B cell (primary cell): ENCODE measurements at regions of chr6 and their contacts with region 1.

Region 1: DNA sequence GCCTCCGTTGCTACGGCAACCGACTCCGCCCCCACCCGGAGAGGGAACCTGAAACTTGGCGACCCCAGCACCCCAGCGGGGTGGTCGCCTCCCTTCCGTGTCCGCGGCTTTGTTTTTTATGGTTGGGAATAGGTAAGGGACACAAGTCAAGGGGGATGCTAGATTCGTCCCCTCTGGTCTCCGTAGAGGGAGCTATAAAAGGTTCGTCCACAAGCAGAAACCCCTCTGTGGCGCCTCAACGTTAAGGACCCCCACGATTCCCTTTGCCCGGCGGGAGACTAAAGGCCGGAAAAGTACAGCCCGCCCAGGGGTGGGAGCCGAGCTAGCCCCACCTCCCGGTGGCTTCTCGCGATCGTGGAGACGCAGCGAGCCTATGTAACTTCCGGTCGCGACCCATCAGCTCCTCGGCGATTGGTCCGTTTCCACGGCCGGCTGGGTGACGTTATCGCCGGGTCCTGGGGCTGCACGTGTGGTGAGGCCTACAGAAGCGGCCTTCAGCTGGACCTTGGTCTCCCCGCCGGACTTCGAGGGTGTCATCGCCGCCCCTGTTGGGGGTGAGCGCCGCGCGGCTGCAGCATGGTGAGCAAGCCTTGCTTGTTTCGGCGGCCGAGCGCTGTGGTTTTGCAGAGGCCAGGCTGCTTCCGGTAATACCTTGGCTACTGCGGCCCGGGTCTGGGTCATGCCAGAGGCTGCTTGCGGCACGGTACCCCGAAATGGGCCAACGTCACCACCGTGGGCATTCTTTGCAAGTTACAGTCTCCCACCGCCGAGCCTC is at the start of gene LTV1:
- DNase-seq: peak; percentile 95
- ATAC-seq: peak; percentile 97
- H3K4me3 ChIP-seq: peak within 1 kb of the TSS; percentile 72 to 94 (median 90)
- H3K4me3 Mint-ChIP-seq: peak within 1 kb of the TSS; percentile 93
- H3K27ac ChIP-seq: peak within 1 kb of the TSS; percentile 86 to 93
- H3K27ac Mint-ChIP-seq: peak within 1 kb of the TSS; percentile 95
- H3K4me1 ChIP-seq: peaks cover 11 to 17% of the 10 kb centered on the region in 2 donors
- H3K4me1 Mint-ChIP-seq: peaks cover 17% of the 10 kb centered on the region
- H3K27me3 ChIP-seq: no peaks in the 10 kb centered on the region
- H3K27me3 Mint-ChIP-seq: peaks cover 11% of the 10 kb centered on the region
- CTCF ChIP-seq: no peak
- total RNA-seq, gene LTV1: 23.6 and 27.3 TPM in 2 replicates

Region 2: GRCh38 chr6:142146828-142147662 is 1696.0 kb before region 1 on chr6 and contains the starts of genes NMBR and VTA1:
- CTCF ChIA-PET with region 1: no interaction called
- POLR2A ChIA-PET with region 1: no interaction called
- intact Hi-C with region 1: loop called (anchors 2 kb)
- DNase-seq: peak; percentile 99
- ATAC-seq: peak; percentile 98
- H3K4me3 ChIP-seq: peak within 1 kb of the TSS; percentile 84 to 97 (median 94)
- H3K4me3 Mint-ChIP-seq: peak within 1 kb of the TSS; percentile 88
- H3K27ac ChIP-seq: peak within 1 kb of the TSS; percentile 60 to 69
- H3K27ac Mint-ChIP-seq: peak within 1 kb of the TSS; percentile 81
- H3K4me1 ChIP-seq: peaks cover 21 to 24% of the 10 kb centered on the region in 2 donors
- H3K4me1 Mint-ChIP-seq: peaks cover 55% of the 10 kb centered on the region
- H3K27me3 ChIP-seq: peaks cover 0 to 3% (median 0%) of the 10 kb centered on the region in 4 experiments
- H3K27me3 Mint-ChIP-seq: peaks cover 3% of the 10 kb centered on the region
- CTCF ChIP-seq: peak; percentile 96
- total RNA-seq, gene NMBR: not detected in 2 replicates
- total RNA-seq, gene VTA1: 26.2 and 27.9 TPM in 2 replicates

Region 3: DNA sequence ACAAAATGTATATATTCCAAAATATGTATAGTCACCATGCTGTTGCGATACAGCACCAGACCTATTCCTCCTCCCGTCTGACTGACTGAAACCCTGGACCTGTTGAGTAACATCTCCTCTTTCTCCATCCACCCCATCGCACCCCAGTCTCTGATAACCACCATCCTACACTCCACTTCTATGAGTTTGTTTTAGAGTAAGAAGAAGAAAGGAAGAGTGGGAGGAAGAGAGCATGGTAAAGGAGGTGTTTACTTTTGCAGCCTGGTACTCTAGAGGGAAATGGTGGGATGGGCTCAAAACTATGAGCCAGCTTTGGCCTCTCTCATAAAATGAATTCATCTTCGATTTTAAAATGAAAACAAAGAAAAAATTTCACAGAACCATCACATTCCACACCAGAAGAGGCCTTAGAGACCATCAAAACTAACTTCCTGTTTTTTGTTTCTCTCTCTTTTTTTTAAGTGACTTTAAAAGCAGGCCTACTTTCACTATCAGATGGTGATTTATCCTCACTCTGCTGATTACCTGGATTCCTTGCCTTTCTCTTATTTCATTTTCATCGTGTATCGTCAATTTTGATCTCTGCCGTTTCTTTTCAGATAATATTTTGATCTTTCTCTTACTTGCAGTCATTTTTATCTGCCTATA is 314.8 kb before region 1 on chr6:
- CTCF ChIA-PET with region 1: no interaction called
- POLR2A ChIA-PET with region 1: no interaction called
- intact Hi-C with region 1: loop called (anchors 1 kb)
- DNase-seq: peak; percentile 60
- ATAC-seq: peak; percentile 69
- H3K4me3 ChIP-seq: no peak overlapping the region
- H3K4me3 Mint-ChIP-seq: no peak overlapping the region
- H3K27ac ChIP-seq: peak overlapping the region; percentile 61 to 70
- H3K27ac Mint-ChIP-seq: peak overlapping the region; percentile 89
- H3K4me1 ChIP-seq: peaks cover 8 to 11% of the 10 kb centered on the region in 2 donors
- H3K4me1 Mint-ChIP-seq: peaks cover 9% of the 10 kb centered on the region
- H3K27me3 ChIP-seq: no peaks in the 10 kb centered on the region
- H3K27me3 Mint-ChIP-seq: no peaks in the 10 kb centered on the region
- CTCF ChIP-seq: no peak

Region 4: DNA sequence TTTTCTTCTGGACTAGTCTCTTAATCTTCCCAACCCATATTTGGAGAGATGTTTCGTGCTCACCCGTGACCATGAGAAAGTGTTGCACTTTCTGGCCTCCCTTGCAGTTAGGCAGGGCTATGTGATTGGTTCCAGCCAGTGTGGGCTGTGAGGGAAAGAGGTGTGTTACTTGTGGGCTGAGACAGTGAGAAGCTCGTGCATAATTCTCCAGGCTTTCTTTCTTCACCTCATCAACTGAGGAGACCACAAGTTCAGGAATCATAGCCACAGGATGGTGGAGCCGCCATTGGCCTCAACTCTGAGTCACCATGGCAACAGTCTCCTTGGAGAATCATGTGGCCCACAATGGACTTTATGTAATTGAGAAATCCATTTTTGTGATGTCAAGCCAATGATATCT is 274.0 kb before region 1 on chr6:
- CTCF ChIA-PET with region 1: no interaction called
- POLR2A ChIA-PET with region 1: no interaction called
- intact Hi-C with region 1: loop called (anchors 5 kb)
- DNase-seq: no peak
- ATAC-seq: no peak
- H3K4me3 ChIP-seq: no peak overlapping the region
- H3K4me3 Mint-ChIP-seq: no peak overlapping the region
- H3K27ac ChIP-seq: no peak overlapping the region
- H3K27ac Mint-ChIP-seq: no peak overlapping the region
- H3K4me1 ChIP-seq: peaks cover 0 to 4% of the 10 kb centered on the region in 2 donors
- H3K4me1 Mint-ChIP-seq: peaks cover 6% of the 10 kb centered on the region
- H3K27me3 ChIP-seq: no peaks in the 10 kb centered on the region
- H3K27me3 Mint-ChIP-seq: no peaks in the 10 kb centered on the region
- CTCF ChIP-seq: no peak

Region 5: DNA sequence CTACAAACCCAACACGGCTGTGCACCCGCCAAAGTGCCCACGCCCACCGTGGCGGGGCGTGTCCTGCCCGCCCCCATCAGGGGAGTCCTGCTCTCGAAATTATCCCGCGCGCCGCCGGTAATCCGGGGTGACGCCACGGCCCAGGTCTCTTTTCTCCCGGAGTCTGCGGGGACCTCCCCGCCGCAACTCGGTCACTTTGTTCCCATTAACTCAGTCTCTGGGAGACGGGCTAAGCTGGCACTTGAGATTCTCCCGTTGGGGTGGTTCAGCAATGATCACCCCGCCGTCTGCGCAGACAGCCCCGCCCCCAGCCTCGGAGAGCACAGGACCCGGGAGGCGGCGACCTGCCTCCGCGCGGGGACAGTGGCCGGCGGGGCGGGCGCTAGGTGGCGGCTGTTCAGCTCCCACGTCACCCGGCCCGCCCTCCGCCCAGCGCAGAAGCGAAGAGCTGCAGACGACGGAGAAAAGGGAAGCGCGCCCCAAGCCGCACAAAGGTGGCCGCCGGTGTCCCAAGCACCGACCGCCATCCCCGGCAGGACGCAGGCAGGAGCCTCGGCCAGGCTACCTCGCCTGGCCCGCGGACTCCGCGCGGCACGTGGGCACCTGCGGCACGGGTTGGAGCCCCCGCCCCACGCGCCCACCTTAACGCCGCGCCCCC is 220.8 kb after region 1 on chr6:
- CTCF ChIA-PET with region 1: no interaction called
- POLR2A ChIA-PET with region 1: no interaction called
- intact Hi-C with region 1: loop called (anchors 1 kb)
- DNase-seq: peak; percentile 97
- ATAC-seq: peak; percentile 91
- H3K4me3 ChIP-seq: peak overlapping the region; percentile 74 to 86 (median 82)
- H3K4me3 Mint-ChIP-seq: peak overlapping the region; percentile 90
- H3K27ac ChIP-seq: peak overlapping the region; percentile 88 to 96
- H3K27ac Mint-ChIP-seq: peak overlapping the region; percentile 92
- H3K4me1 ChIP-seq: peaks cover 21 to 32% of the 10 kb centered on the region in 2 donors
- H3K4me1 Mint-ChIP-seq: peaks cover 37% of the 10 kb centered on the region
- H3K27me3 ChIP-seq: no peaks in the 10 kb centered on the region
- H3K27me3 Mint-ChIP-seq: no peaks in the 10 kb centered on the region
- CTCF ChIP-seq: peak; percentile 14

Region 6: GRCh38 chr6:144149891-144150709 is 307.0 kb after region 1 on chr6 and contains the start of gene STX11:
- CTCF ChIA-PET with region 1: no interaction called
- POLR2A ChIA-PET with region 1: no interaction called
- intact Hi-C with region 1: loop called (anchors 2 kb)
- DNase-seq: peak; percentile 85
- ATAC-seq: peak; percentile 75
- H3K4me3 ChIP-seq: peak within 1 kb of the TSS; percentile 54 to 96 (median 76)
- H3K4me3 Mint-ChIP-seq: peak within 1 kb of the TSS; percentile 96
- H3K27ac ChIP-seq: peak within 1 kb of the TSS; percentile 61 to 78
- H3K27ac Mint-ChIP-seq: peak within 1 kb of the TSS; percentile 97
- H3K4me1 ChIP-seq: peaks cover 9 to 15% of the 10 kb centered on the region in 2 donors
- H3K4me1 Mint-ChIP-seq: peaks cover 42% of the 10 kb centered on the region
- H3K27me3 ChIP-seq: no peaks in the 10 kb centered on the region
- H3K27me3 Mint-ChIP-seq: no peaks in the 10 kb centered on the region
- CTCF ChIP-seq: no peak
- total RNA-seq, gene STX11: 10.3 and 11.6 TPM in 2 replicates